ENCODE measurements at regions of chr10 and their contacts with region 1.

Region 1: DNA sequence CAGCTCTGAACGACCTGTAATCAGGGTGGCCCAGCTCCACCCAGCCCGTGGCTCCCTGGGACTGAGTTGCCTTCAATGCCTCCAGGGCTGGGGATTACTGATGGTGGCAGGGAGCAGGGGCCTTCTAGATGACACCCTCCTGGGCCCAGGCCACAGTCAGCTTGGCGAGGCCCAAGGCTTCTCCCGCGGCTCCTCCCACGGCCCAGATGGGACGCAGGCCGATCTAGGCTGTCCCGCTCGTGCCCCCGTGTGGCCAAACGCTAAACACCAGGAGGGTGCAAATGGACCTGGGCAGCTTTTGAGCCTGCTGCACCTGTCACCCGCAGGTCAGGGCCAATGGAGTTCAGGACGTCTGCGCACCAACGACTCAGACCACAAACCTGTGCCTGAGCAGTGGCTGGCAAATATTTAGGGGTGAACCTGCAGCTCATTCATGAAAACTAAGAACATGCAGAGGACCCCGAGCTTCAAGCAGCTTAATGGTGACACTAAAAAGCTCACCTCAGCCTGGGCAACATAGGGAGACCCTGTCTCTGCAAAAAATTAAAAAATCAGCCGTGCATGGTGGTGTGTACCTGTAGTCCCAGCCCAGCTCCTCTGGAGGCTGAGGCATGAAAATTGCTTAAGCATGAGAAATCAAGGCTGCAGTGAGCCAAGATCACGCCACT is 43.2 kb downstream of the ASB13 start:
- DNase-seq: peak; percentile 81
- ATAC-seq: peak; percentile 99
- H3K4me3 ChIP-seq: no peak overlapping the region
- H3K4me3 Mint-ChIP-seq: no peak overlapping the region
- H3K27ac ChIP-seq: no peak overlapping the region
- H3K27ac Mint-ChIP-seq: no peak overlapping the region
- H3K4me1 ChIP-seq: peaks cover 0 to 6% of the 10 kb centered on the region in 2 donors
- H3K4me1 Mint-ChIP-seq: peaks cover 3% of the 10 kb centered on the region
- H3K27me3 ChIP-seq: no peaks in the 10 kb centered on the region
- H3K27me3 Mint-ChIP-seq: no peaks in the 10 kb centered on the region
- CTCF ChIP-seq: peak; percentile 84

Region 2: GRCh38 chr10:4849555-4850242 is 773.5 kb before region 1 on chr10:
- CTCF ChIA-PET with region 1: interaction called, 23 read pairs
- POLR2A ChIA-PET with region 1: no interaction called
- intact Hi-C with region 1: loop called (anchors 2 kb)
- DNase-seq: peak; percentile 79
- ATAC-seq: peak; percentile 76
- H3K4me3 ChIP-seq: no peak overlapping the region
- H3K4me3 Mint-ChIP-seq: peak overlapping the region; percentile 63
- H3K27ac ChIP-seq: no peak overlapping the region
- H3K27ac Mint-ChIP-seq: no peak overlapping the region
- H3K4me1 ChIP-seq: peaks cover 8 to 10% of the 10 kb centered on the region in 2 donors
- H3K4me1 Mint-ChIP-seq: peaks cover 12% of the 10 kb centered on the region
- H3K27me3 ChIP-seq: no peaks in the 10 kb centered on the region
- H3K27me3 Mint-ChIP-seq: peaks cover 6% of the 10 kb centered on the region
- CTCF ChIP-seq: peak; percentile 85

Region 3: GRCh38 chr10:5453749-5454489 is 169.3 kb before region 1 on chr10:
- CTCF ChIA-PET with region 1: interaction called, 659 read pairs
- POLR2A ChIA-PET with region 1: no interaction called
- intact Hi-C with region 1: no loop called
- DNase-seq: no peak
- ATAC-seq: no peak
- H3K4me3 ChIP-seq: no peak overlapping the region
- H3K4me3 Mint-ChIP-seq: no peak overlapping the region
- H3K27ac ChIP-seq: no peak overlapping the region
- H3K27ac Mint-ChIP-seq: no peak overlapping the region
- H3K4me1 ChIP-seq: peaks cover 0 to 2% of the 10 kb centered on the region in 2 donors
- H3K4me1 Mint-ChIP-seq: peaks cover 3% of the 10 kb centered on the region
- H3K27me3 ChIP-seq: no peaks in the 10 kb centered on the region
- H3K27me3 Mint-ChIP-seq: no peaks in the 10 kb centered on the region
- CTCF ChIP-seq: no peak

Region 4: DNA sequence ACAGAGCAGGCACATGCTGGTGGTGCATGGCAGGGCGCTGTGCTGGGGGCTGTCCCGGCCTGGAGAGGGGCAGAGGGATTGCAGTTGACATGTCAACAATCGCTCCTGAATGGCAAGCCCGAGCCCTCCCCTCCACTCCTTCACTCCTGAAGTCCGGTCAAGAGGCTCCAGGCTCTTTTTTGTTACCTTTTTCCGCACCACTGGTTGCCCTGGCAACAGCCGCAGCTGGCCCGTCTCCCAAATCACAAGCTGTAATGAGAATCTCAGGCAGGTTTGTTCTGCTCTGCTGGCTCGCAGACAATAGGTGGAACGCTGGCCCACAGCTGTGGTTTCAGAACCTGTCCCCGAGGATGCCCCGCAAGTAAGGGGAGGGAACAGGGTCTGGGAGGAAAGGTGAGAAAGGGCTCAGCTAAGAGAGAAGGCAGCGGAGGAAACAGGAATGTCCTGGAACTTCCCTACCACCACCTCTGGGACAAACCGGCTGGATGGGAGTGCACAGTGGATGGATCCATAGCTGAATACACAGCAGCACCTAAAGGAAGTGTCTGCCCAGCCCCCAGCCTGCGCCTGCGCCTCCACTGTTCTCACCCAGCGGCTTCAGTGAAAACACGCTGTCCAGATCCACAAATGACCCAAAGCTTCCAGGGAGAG is 39.6 kb before region 1 on chr10:
- CTCF ChIA-PET with region 1: interaction called, 21 read pairs
- POLR2A ChIA-PET with region 1: no interaction called
- intact Hi-C with region 1: no loop called
- DNase-seq: peak; percentile 42
- ATAC-seq: peak; percentile 42
- H3K4me3 ChIP-seq: no peak overlapping the region
- H3K4me3 Mint-ChIP-seq: peak overlapping the region; percentile 62
- H3K27ac ChIP-seq: no peak overlapping the region
- H3K27ac Mint-ChIP-seq: no peak overlapping the region
- H3K4me1 ChIP-seq: peaks cover 32 to 33% of the 10 kb centered on the region in 2 donors
- H3K4me1 Mint-ChIP-seq: peaks cover 44% of the 10 kb centered on the region
- H3K27me3 ChIP-seq: peaks cover 0 to 7% (median under 1%) of the 10 kb centered on the region in 4 experiments
- H3K27me3 Mint-ChIP-seq: peaks cover 9% of the 10 kb centered on the region
- CTCF ChIP-seq: no peak

Region 5: GRCh38 chr10:5606864-5607263 is 16.4 kb before region 1 on chr10:
- CTCF ChIA-PET with region 1: interaction called, 10 read pairs
- POLR2A ChIA-PET with region 1: interaction called, 3 read pairs
- intact Hi-C with region 1: no loop called
- DNase-seq: no peak
- ATAC-seq: no peak
- H3K4me3 ChIP-seq: no peak overlapping the region
- H3K4me3 Mint-ChIP-seq: no peak overlapping the region
- H3K27ac ChIP-seq: no peak overlapping the region
- H3K27ac Mint-ChIP-seq: no peak overlapping the region
- H3K4me1 ChIP-seq: no peaks in the 10 kb centered on the region
- H3K4me1 Mint-ChIP-seq: no peaks in the 10 kb centered on the region
- H3K27me3 ChIP-seq: peaks cover 0 to 18% (median 2%) of the 10 kb centered on the region in 4 experiments
- H3K27me3 Mint-ChIP-seq: peaks cover 17% of the 10 kb centered on the region
- CTCF ChIP-seq: no peak

Region 6: DNA sequence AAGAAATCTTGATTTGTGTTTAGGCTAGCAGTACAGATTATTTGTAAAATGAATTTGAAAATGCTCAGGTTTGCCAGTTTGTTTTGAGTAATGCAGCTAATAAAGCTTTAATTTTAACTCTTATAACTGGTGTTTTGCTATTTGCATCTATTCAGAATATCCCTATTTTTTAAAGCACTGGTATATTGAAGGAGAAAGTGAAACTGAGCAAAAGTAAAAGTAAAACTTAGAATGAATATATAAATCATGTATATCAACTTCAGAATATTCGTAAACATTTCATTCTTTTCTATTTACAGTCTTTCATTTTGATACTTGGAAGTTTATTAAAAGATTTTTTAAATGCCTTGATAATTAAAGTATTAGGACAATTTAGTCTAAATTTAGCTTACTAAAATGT is 87.6 kb after region 1 on chr10:
- CTCF ChIA-PET with region 1: interaction called, 16 read pairs
- POLR2A ChIA-PET with region 1: no interaction called
- intact Hi-C with region 1: no loop called
- DNase-seq: no peak
- ATAC-seq: no peak
- H3K4me3 ChIP-seq: peak overlapping the region in 3 of 5 experiments; percentile 25 to 60 (median 26)
- H3K4me3 Mint-ChIP-seq: peak overlapping the region; percentile 17
- H3K27ac ChIP-seq: peak overlapping the region in 1 of 2 donors; percentile 43
- H3K27ac Mint-ChIP-seq: no peak overlapping the region
- H3K4me1 ChIP-seq: peaks cover 4 to 27% of the 10 kb centered on the region in 2 donors
- H3K4me1 Mint-ChIP-seq: peaks cover 51% of the 10 kb centered on the region
- H3K27me3 ChIP-seq: no peaks in the 10 kb centered on the region
- H3K27me3 Mint-ChIP-seq: no peaks in the 10 kb centered on the region
- CTCF ChIP-seq: no peak